H1 (cell line): ENCODE measurements at regions of chr1 and their contacts with region 1.

Region 1: DNA sequence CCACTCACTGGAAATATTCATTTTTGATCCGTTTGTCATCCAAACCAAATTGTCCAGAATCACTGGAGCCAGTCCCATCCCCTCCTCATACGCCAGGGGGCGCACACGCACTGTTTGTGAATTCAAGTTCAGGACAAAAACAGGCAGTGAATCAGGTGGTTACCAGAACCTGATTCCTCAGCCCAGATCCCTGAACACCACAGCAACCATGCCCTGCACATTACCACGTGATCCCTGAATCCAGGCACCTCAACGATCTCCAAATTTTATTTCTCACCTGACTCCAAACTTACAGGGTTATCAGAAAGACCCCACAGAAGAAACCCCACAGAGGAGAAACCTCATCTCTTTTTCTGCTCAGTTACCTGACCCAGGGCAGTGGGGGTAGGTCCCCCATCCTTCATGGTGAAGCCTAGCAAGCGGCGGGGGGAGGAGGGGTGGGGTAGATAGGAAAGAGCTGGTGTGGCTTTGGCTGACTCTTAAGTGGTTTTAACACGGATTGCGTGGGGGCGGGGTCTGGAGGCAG is 1.4 kb upstream of the PTPRF start:
- DNase-seq: peak in 1 of 2 experiments; percentile 90
- H3K4me3 ChIP-seq: peak overlapping the region in 1 of 4 experiments; percentile 45; a peak in 1 of 8 replicates
- H3K27ac ChIP-seq: no peak overlapping the region
- H3K4me1 ChIP-seq: peaks cover 15 to 21% (median 18%) of the 10 kb centered on the region in 4 experiments
- H3K27me3 ChIP-seq: peaks cover 0 to 8% (median 6%) of the 10 kb centered on the region in 4 experiments; a peak in 5 of 7 replicates
- CTCF ChIP-seq: peak; percentile 84 to 98 (median 90)
- EP300 ChIP-seq: no peak
- POLR2A ChIP-seq: no peak
- RAD21 ChIP-seq: peak; percentile 97 to 98

Region 2: GRCh38 chr1:43107664-43108063 is 421.6 kb before region 1 on chr1:
- CTCF ChIA-PET with region 1: no interaction called
- POLR2A ChIA-PET with region 1: no interaction called
- DNase-seq: no peak
- H3K4me3 ChIP-seq: no peak overlapping the region
- H3K27ac ChIP-seq: no peak overlapping the region
- H3K4me1 ChIP-seq: no peaks in the 10 kb centered on the region
- H3K27me3 ChIP-seq: no peaks in the 10 kb centered on the region
- CTCF ChIP-seq: no peak
- EP300 ChIP-seq: no peak
- POLR2A ChIP-seq: no peak
- RAD21 ChIP-seq: no peak

Region 3: GRCh38 chr1:43565600-43566360 is 36.5 kb after region 1 on chr1:
- CTCF ChIA-PET with region 1: interaction called, 16 read pairs
- POLR2A ChIA-PET with region 1: interaction called, 6 read pairs
- DNase-seq: peak in 1 of 2 experiments; percentile 88
- H3K4me3 ChIP-seq: peak overlapping the region in 3 of 4 experiments; percentile 18 to 50 (median 32); a peak in 6 of 8 replicates
- H3K27ac ChIP-seq: no peak overlapping the region; the same call in 1 of the 2 replicates
- H3K4me1 ChIP-seq: peaks cover 0 to 25% (median 20%) of the 10 kb centered on the region in 4 experiments; a peak in 6 of 7 replicates
- H3K27me3 ChIP-seq: no peaks in the 10 kb centered on the region
- CTCF ChIP-seq: no peak
- EP300 ChIP-seq: no peak
- POLR2A ChIP-seq: no peak
- RAD21 ChIP-seq: no peak

Region 4: GRCh38 chr1:43590389-43590925 is 61.2 kb after region 1 on chr1:
- CTCF ChIA-PET with region 1: interaction called, 21 read pairs
- POLR2A ChIA-PET with region 1: interaction called, 5 read pairs
- DNase-seq: no peak
- H3K4me3 ChIP-seq: no peak overlapping the region
- H3K27ac ChIP-seq: no peak overlapping the region
- H3K4me1 ChIP-seq: no peaks in the 10 kb centered on the region
- H3K27me3 ChIP-seq: no peaks in the 10 kb centered on the region
- CTCF ChIP-seq: peak; percentile 53 to 78 (median 63)
- EP300 ChIP-seq: no peak
- POLR2A ChIP-seq: no peak
- RAD21 ChIP-seq: peak; percentile 64 to 69